Calu3 (cell line): ENCODE measurements at regions of chr5 and their contacts with region 1.

Region 1: GRCh38 chr5:115571441-115571878 is 26.9 kb upstream of the FEM1C start:
- DNase-seq: no peak
- H3K4me3 Mint-ChIP-seq: no peak overlapping the region
- H3K27ac Mint-ChIP-seq: no peak overlapping the region
- H3K4me1 Mint-ChIP-seq: peaks cover 30% of the 10 kb centered on the region
- H3K27me3 Mint-ChIP-seq: no peaks in the 10 kb centered on the region
- CTCF ChIP-seq: no peak

Region 2: GRCh38 chr5:115535479-115536035 is 35.9 kb before region 1 on chr5:
- CTCF ChIA-PET with region 1: interaction called, 5 read pairs
- intact Hi-C with region 1: loop called (anchors 5 kb)
- DNase-seq: no peak
- H3K4me3 Mint-ChIP-seq: peak overlapping the region; percentile 80
- H3K27ac Mint-ChIP-seq: peak overlapping the region; percentile 16
- H3K4me1 Mint-ChIP-seq: peaks cover 84% of the 10 kb centered on the region
- H3K27me3 Mint-ChIP-seq: no peaks in the 10 kb centered on the region
- CTCF ChIP-seq: no peak

Region 3: DNA sequence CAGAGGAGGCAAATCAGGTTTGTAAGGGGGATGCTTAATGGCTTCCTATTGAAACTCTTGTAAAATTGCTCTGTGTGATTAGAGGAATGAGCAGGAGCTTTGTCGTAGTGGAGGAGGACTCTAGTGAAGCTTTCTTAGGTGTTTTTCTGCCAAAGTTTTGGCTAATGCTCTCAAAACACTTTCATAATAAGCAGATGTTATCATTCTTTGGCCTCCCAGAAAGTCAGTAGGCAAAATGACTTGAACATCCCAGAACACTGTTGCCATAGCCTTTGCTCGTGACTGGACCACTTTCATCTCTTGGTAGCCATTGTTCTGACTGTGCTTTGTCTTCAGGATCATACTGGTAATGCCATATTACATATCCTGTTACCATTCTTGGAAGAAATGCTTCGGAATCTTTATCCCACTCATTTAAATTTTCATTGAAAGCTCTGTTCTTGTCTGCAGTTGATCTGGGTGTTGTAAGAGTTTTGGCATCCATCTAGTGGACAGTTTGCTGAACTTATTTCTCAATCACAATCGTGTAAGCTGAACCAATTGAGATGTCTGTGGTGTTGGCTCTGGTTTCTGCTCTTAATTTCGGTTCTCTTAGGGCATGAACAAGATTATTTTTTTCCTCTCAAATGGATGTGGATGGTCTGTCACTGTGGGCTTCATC is 701.0 kb after region 1 on chr5:
- CTCF ChIA-PET with region 1: no interaction called
- intact Hi-C with region 1: no loop called
- DNase-seq: no peak
- H3K4me3 Mint-ChIP-seq: no peak overlapping the region
- H3K27ac Mint-ChIP-seq: no peak overlapping the region
- H3K4me1 Mint-ChIP-seq: peaks cover 12% of the 10 kb centered on the region
- H3K27me3 Mint-ChIP-seq: no peaks in the 10 kb centered on the region
- CTCF ChIP-seq: no peak